ENCODE measurements at regions of chr3 and their contacts with region 1.

Region 1: GRCh38 chr3:122383771-122384697 is at the start of gene FAM162A:
- DNase-seq: peak; percentile 90 to 94 (median 92)
- ATAC-seq: peak; percentile 98
- H3K4me3 ChIP-seq: peak within 1 kb of the TSS; percentile 84
- H3K4me3 Mint-ChIP-seq: peak within 1 kb of the TSS; percentile 87 to 99 (median 95)
- H3K27ac ChIP-seq: peak within 1 kb of the TSS; percentile 85
- H3K27ac Mint-ChIP-seq: peak within 1 kb of the TSS; percentile 88 to 98 (median 95)
- H3K4me1 ChIP-seq: peaks cover 12 to 15% of the 10 kb centered on the region in 2 donors
- H3K4me1 Mint-ChIP-seq: peaks cover 18 to 69% (median 55%) of the 10 kb centered on the region in 7 donors
- H3K27me3 ChIP-seq: no peaks in the 10 kb centered on the region
- H3K27me3 Mint-ChIP-seq: no peaks in the 10 kb centered on the region
- total RNA-seq, gene FAM162A: 17.6 to 73.2 (median 35.5) TPM

Region 2: DNA sequence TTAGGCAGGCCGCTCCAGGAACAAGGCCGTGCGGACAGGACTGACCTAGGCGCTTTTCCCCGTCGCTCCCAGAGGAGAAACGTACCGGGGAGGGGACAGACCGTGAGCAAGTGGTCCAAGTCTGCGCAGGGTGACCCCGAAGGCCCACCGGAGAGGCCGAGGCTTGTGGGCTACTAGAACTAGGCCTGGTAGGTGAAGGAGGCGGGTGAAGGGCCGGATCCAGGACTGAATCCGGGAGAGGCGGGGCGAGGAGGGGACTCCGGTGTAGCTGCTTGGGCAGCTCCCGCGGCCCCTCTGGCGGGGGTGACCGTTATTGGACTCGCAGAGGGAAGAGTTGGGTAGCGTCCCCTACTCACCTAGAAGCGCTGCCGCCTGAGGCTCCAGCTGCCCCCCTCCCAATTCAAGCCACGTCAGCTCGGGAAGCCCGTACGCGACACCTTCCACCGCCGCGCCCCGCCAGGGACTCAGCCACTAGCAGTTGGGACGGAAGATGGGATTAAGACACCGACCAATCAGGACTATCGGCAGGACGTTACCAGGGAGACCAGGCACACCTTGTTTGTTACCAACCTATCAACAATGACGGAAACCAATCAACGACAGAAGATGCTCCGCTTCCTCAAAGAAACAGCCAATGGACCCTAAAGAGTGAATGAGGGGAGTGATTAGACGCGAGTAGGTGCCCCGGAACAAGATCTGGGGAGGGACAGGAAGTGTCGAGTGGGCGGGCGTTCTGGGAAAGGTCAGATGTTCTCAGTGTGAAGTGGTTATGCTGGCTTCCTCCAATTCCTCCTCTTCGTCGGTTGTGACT is 634.6 kb before region 1 on chr3 and contains the start of gene GOLGB1:
- CTCF ChIA-PET with region 1: no interaction called
- POLR2A ChIA-PET with region 1: no interaction called
- intact Hi-C with region 1: loop called (anchors 1 kb)
- DNase-seq: peak; percentile 79 to 98 (median 96)
- ATAC-seq: peak; percentile 96
- H3K4me3 ChIP-seq: peak within 1 kb of the TSS; percentile 78
- H3K4me3 Mint-ChIP-seq: peak within 1 kb of the TSS in 3 of 10 donors; percentile 5 to 58 (median 39)
- H3K27ac ChIP-seq: peak within 1 kb of the TSS; percentile 96
- H3K27ac Mint-ChIP-seq: peak within 1 kb of the TSS in 2 of 9 donors; percentile 19 to 36
- H3K4me1 ChIP-seq: peaks cover 4 to 11% of the 10 kb centered on the region in 2 donors
- H3K4me1 Mint-ChIP-seq: peaks cover 5 to 18% (median 10%) of the 10 kb centered on the region in 7 donors
- H3K27me3 ChIP-seq: no peaks in the 10 kb centered on the region
- H3K27me3 Mint-ChIP-seq: peaks cover 0 to 24% (median 14%) of the 10 kb centered on the region in 5 donors
- total RNA-seq, gene GOLGB1: 29.5 to 49.7 (median 44.5) TPM

Region 3: DNA sequence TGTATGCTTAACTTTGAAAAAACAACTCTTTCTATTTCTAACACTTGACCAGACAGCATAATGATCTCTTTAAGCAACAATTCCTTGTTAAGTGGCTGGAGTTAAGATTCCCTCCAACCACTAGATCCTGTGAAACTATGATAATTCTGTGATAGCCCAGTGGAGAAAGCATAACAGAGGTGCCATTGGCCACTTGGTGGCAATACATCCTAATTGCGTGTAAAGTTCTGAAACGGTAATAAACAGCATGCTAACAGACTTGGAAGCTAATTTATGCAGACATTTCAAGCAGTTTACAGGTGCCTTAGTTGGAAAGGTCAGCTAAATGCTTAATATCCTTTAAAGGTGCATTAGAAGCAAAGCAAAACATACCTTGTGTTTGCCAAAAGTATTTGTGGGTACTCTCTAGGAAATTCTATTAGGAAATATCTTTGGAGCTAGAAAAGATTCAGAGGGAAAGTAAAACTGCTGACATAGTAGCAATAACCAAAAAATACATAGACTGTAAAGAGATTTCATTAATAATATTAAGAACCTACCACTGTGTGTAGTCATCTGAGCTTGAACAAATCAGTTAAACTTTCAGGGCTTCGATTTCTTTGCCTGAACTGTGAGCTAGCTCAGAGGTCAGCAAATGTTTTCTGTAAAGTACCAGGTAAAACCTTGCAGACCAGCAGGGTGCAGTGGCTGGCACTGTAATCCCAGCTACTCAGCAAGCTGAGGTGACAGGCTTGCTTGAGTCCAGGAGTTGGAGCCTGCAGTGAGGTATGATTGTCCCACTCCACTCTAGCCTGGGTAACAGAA is 78.0 kb before region 1 on chr3:
- CTCF ChIA-PET with region 1: no interaction called
- POLR2A ChIA-PET with region 1: no interaction called
- intact Hi-C with region 1: loop called in 1 of 2 experiments (anchors 2 kb)
- DNase-seq: no peak
- ATAC-seq: no peak
- H3K4me3 ChIP-seq: no peak overlapping the region
- H3K4me3 Mint-ChIP-seq: no peak overlapping the region
- H3K27ac ChIP-seq: no peak overlapping the region
- H3K27ac Mint-ChIP-seq: no peak overlapping the region
- H3K4me1 ChIP-seq: no peaks in the 10 kb centered on the region
- H3K4me1 Mint-ChIP-seq: peaks cover 0 to under 1% (median 0%) of the 10 kb centered on the region in 7 donors
- H3K27me3 ChIP-seq: no peaks in the 10 kb centered on the region
- H3K27me3 Mint-ChIP-seq: peaks cover 0 to 12% (median 5%) of the 10 kb centered on the region in 5 donors

Region 4: GRCh38 chr3:122415720-122416654 is 32.0 kb after region 1 on chr3 and contains the start of gene WDR5B:
- CTCF ChIA-PET with region 1: interaction called, 6 read pairs
- POLR2A ChIA-PET with region 1: interaction called, 112 read pairs
- intact Hi-C with region 1: loop called (anchors 1 kb)
- DNase-seq: peak; percentile 95 to 99 (median 99)
- ATAC-seq: peak; percentile 94
- H3K4me3 ChIP-seq: peak within 1 kb of the TSS; percentile 96
- H3K4me3 Mint-ChIP-seq: peak within 1 kb of the TSS; percentile 92 to 99 (median 97)
- H3K27ac ChIP-seq: peak within 1 kb of the TSS; percentile 93
- H3K27ac Mint-ChIP-seq: peak within 1 kb of the TSS; percentile 98 to 100 (median 100)
- H3K4me1 ChIP-seq: peaks cover 19 to 24% of the 10 kb centered on the region in 2 donors
- H3K4me1 Mint-ChIP-seq: peaks cover 24 to 72% (median 65%) of the 10 kb centered on the region in 7 donors
- H3K27me3 ChIP-seq: no peaks in the 10 kb centered on the region
- H3K27me3 Mint-ChIP-seq: peaks cover 0 to 3% (median 0%) of the 10 kb centered on the region in 5 donors
- total RNA-seq, gene WDR5B: 4.8 to 19.4 (median 6.4) TPM

Region 5: GRCh38 chr3:122793568-122794416 is 409.8 kb after region 1 on chr3 and contains the start of gene HSPBAP1:
- CTCF ChIA-PET with region 1: interaction called, 3 read pairs
- POLR2A ChIA-PET with region 1: interaction called, 6 read pairs
- intact Hi-C with region 1: loop called (anchors 1 to 2 kb)
- DNase-seq: peak; percentile 71 to 90 (median 86)
- ATAC-seq: peak; percentile 77
- H3K4me3 ChIP-seq: peak within 1 kb of the TSS; percentile 83
- H3K4me3 Mint-ChIP-seq: peak within 1 kb of the TSS in 5 of 10 donors; percentile 91 to 97 (median 95)
- H3K27ac ChIP-seq: peak within 1 kb of the TSS; percentile 82
- H3K27ac Mint-ChIP-seq: peak within 1 kb of the TSS in 6 of 9 donors; percentile 79 to 99 (median 96)
- H3K4me1 ChIP-seq: peaks cover 22 to 34% of the 10 kb centered on the region in 2 donors
- H3K4me1 Mint-ChIP-seq: peaks cover 20 to 29% (median 27%) of the 10 kb centered on the region in 7 donors
- H3K27me3 ChIP-seq: no peaks in the 10 kb centered on the region
- H3K27me3 Mint-ChIP-seq: no peaks in the 10 kb centered on the region
- total RNA-seq, gene HSPBAP1: 9.0 to 31.5 (median 23.3) TPM

Region 6: GRCh38 chr3:123960781-123961507 is 1576.9 kb after region 1 on chr3 and contains the start of gene CCDC14:
- CTCF ChIA-PET with region 1: no interaction called
- POLR2A ChIA-PET with region 1: no interaction called
- intact Hi-C with region 1: loop called in 1 of 2 experiments (anchors 10 kb)
- DNase-seq: peak; percentile 43 to 81 (median 60)
- ATAC-seq: peak; percentile 91
- H3K4me3 ChIP-seq: peak within 1 kb of the TSS; percentile 85
- H3K4me3 Mint-ChIP-seq: peak within 1 kb of the TSS; percentile 93 to 98 (median 96)
- H3K27ac ChIP-seq: peak within 1 kb of the TSS; percentile 78
- H3K27ac Mint-ChIP-seq: peak within 1 kb of the TSS; percentile 82 to 96 (median 91)
- H3K4me1 ChIP-seq: peaks cover 0 to 12% of the 10 kb centered on the region in 2 donors
- H3K4me1 Mint-ChIP-seq: peaks cover 12 to 35% (median 30%) of the 10 kb centered on the region in 7 donors
- H3K27me3 ChIP-seq: no peaks in the 10 kb centered on the region
- H3K27me3 Mint-ChIP-seq: peaks cover 0 to 30% (median 8%) of the 10 kb centered on the region in 5 donors
- total RNA-seq, gene CCDC14: 24.6 to 48.1 (median 37.3) TPM

Measured in naive thymus-derived CD4-positive, alpha-beta T cell (primary cell).